PC-9 (cell line): ENCODE measurements at regions of chr5 and their contacts with region 1.

Region 1: DNA sequence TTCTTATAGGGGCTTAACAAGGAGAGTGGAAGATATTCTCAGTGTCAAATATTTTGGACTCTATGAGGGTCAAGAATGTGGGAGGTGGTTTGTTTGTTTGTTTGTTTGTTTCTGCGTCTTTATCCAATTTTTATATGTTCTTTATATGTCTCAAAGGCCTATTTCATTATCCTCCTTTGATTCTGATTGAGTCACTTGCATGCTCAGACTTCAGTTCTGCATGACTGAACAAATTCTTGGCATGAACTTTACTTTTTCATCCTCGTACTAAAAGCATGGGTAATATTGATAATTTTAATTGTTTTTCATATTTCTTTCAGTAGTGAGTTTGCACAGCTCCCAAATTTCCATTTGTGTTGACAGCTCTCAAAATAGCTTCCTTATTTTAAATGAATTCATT is 19.2 kb upstream of the ERBIN start:
- DNase-seq: peak in 1 of 2 experiments; percentile 71
- H3K4me3 ChIP-seq: no peak overlapping the region
- H3K27ac ChIP-seq: no peak overlapping the region
- H3K4me1 ChIP-seq: peaks cover 19% of the 10 kb centered on the region
- H3K27me3 ChIP-seq: no peaks in the 10 kb centered on the region
- CTCF ChIP-seq: no peak

Region 2: DNA sequence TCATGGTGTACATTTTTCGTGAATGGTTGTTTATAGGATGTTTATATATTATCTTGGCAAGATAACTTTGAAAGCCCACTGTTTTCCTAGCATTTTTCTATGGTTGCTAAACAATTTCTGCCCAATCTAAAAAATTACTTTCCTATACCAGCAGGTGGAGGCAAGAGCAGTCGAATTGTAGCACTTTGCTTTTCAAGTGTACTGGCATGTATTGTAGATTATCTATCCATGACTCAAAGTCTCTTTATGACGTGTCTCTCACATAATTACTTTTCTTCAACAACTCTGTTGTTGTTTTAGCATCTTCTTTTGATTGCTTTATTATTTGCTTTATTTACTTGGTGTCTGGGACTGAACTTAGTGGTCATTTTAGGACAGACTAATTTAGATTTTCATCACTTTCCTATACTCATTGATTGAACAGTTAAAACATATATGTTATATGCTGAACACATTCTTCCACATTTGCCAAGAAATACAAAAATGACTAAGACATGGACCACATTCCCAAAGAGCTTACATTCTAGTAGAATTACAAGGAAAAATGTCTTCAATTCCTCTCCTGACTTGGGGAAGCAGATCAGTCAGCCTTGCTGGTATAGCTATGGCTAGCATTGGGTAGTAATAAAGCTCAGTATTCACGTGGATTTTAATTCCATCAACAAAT is 164.4 kb before region 1 on chr5:
- CTCF ChIA-PET with region 1: interaction called, 13 read pairs
- POLR2A ChIA-PET with region 1: no interaction called
- intact Hi-C with region 1: no loop called
- DNase-seq: peak; percentile 12 to 62
- H3K4me3 ChIP-seq: no peak overlapping the region
- H3K27ac ChIP-seq: no peak overlapping the region; the same call in 1 of the 2 replicates
- H3K4me1 ChIP-seq: peaks cover 5% of the 10 kb centered on the region
- H3K27me3 ChIP-seq: no peaks in the 10 kb centered on the region
- CTCF ChIP-seq: peak; percentile 86

Region 3: GRCh38 chr5:65994117-65994786 is 87.1 kb after region 1 on chr5:
- CTCF ChIA-PET with region 1: interaction called, 10 read pairs
- POLR2A ChIA-PET with region 1: no interaction called
- intact Hi-C with region 1: no loop called
- DNase-seq: no peak
- H3K4me3 ChIP-seq: no peak overlapping the region
- H3K27ac ChIP-seq: no peak overlapping the region
- H3K4me1 ChIP-seq: no peaks in the 10 kb centered on the region
- H3K27me3 ChIP-seq: no peaks in the 10 kb centered on the region
- CTCF ChIP-seq: no peak